A549 (cell line): ENCODE measurements at regions of chrX and their contacts with region 1.

Region 1: DNA sequence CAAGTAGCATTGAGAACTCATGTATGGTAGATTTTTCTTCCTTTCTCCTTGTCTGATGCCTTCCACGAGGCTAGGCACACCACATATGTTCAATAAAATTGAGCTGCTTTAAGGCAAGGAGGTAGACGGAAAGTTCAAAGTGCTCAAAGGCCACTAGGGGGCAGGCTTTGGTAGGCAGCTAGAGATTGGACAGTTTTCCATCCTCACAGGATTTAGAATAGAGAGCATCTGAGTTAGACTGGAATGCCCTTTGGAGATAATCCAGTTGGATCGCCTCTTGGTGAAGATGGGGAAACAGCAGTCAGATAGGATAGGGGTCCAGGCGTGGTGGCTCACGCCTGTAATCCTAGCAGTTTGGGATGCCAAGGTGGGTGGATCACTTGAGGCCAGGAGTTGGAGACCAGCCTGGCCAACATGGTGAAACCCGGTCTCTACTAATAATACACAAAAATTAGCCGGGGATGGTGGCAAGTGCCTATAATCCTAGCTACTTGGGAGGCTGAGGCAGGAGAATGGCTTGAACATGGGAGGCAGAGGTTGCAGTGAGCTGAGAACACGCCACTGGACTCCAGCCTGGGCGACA is 30.4 kb downstream of the ELF4 start:
- DNase-seq: peak; percentile 71 to 72
- ATAC-seq: peak; percentile 75 to 89; a peak in 5 of 6 replicates
- H3K4me3 ChIP-seq: no peak overlapping the region
- H3K27ac ChIP-seq: no peak overlapping the region
- H3K4me1 ChIP-seq: 0 out of 3 replicates have a peak, but pooled peaks cover 3% of the 10 kb centered on the region
- CTCF ChIP-seq: peak; percentile 78
- EP300 ChIP-seq: no peak
- POLR2A ChIP-seq: no peak
- RAD21 ChIP-seq: peak; percentile 79 to 85

Region 2: DNA sequence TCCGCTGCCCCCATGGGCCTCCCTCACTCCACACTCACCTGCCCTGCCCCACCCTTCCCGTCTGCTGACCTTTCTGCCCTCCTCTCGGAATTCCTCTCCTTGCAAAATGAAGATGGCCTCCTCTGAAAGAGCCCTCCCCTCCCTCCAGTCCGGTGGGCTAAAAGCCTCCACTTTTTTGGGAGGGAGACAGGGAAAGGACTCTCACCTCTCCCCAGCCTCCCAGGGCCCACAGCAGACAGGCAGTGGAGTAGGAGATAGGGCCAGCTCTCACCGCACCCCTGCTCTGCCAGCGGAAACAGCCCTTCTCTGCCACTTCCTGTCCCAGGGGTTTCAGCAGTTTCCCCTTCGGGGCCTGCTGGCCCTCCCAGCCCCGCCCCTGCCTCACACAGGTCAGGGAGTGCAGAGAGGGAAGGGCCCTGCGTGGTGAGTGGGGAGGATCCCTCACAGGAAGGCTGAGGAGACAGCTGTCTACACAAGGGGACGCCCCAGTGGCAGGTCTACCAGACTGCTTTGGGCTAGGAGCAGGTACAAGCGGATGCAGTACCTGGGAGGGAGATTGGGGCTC is 12.1 kb after region 1 on chrX:
- CTCF ChIA-PET with region 1: interaction called, 11 read pairs
- POLR2A ChIA-PET with region 1: no interaction called
- DNase-seq: no peak
- ATAC-seq: peak; percentile 50 to 60; a peak in 4 of 6 replicates
- H3K4me3 ChIP-seq: no peak overlapping the region
- H3K27ac ChIP-seq: peak overlapping the region in 1 of 2 experiments; percentile 25; a peak in 1 of 6 replicates
- H3K4me1 ChIP-seq: 0 out of 3 replicates have a peak, but pooled peaks cover 6% of the 10 kb centered on the region
- CTCF ChIP-seq: no peak
- EP300 ChIP-seq: no peak
- POLR2A ChIP-seq: no peak
- RAD21 ChIP-seq: no peak

Region 3: DNA sequence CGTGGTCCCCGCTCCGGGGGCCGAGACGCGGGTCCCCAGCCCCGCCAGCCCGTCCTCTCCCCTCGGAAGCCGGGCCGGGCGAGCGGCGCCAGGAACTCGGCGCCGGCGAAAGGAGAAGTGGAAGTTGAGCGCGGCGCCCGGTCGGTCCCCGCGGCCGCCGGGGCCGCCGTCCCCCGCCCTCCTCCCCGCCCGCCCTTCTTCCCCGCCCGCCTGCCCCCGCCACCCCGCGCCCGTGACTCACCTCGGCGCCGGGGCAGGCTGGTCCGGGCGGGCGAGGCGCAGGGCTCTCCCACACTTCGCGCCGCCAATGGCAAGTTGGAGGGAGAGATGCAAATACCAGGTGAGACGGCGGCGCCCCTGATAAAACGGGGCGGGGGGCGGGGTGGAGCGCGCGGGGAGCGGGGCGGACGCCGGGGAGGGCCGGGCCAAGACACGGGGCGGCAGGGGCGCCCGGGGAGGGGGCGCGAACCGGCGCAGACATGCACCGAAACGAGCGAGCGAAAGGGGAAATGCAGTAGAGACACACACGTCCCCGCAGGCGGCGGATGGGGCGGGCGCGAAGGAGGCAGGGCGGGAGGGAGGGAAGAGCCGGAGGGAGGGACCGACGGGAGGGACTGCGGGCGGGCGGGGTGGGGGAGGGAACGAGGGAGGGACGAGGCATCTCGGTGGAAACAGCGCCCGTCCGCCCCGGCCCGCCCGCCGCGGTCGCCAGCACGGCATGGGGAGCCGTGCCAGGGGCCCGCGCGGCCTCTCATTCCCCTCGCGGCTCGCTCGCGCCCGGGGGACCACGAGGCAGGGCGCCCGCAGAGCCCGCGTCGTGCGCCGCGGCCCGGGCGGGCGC is 30.7 kb after region 1 on chrX and contains the start of gene ELF4:
- CTCF ChIA-PET with region 1: interaction called, 91 read pairs
- POLR2A ChIA-PET with region 1: interaction called, 4 read pairs
- DNase-seq: peak; percentile 65 to 70
- ATAC-seq: peak; percentile 51 to 71
- H3K4me3 ChIP-seq: peak within 1 kb of the TSS; percentile 98
- H3K27ac ChIP-seq: peak within 1 kb of the TSS; percentile 85 to 98
- H3K4me1 ChIP-seq: peaks cover 41% of the 10 kb centered on the region
- CTCF ChIP-seq: 0 out of 3 replicates have a peak, but pooled peaks have one; percentile 16
- EP300 ChIP-seq: no peak
- POLR2A ChIP-seq: peak; percentile 14; the same call in 1 of the 2 replicates
- RAD21 ChIP-seq: no peak
- polyA plus RNA-seq, gene ELF4: 18.0 and 18.4 TPM in 2 replicates

Region 4: DNA sequence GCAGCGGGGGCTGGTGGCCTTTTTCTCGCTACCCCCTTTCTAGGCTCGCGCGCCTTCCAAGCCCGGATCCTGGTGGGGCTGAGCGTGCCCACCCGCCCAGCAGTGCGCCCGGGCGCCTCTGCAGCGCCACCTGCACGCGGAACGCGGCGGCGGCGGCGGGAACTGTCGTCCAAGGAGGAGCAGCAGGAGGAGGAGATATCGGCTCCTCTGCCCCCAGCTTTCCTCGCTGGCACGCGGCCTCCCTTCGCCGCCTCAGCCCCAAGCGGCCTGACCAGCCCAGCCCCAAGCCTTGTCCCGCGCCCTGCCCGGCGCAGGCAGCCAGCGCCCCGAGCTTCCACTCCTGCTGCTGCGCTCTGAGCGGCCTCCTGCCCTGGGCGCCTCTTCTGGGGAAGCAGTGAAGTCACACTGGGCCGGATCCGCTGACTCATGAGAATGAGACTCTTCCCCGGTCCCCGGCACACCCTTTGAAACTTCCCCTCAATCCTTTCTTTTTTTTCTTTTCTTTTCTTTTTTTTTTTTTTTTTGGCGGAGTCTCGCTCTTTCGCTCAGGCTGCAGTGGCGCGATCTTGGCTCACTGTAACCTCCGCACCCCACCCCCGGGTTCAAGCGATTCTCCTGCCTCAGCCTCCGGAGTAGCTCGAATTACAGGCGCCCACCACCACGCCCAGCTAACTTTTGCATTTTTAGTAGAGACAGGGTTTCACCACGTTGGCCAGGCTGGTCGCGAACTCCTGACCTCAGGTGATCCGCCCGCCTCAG is 41.0 kb after region 1 on chrX:
- CTCF ChIA-PET with region 1: interaction called, 91 read pairs
- POLR2A ChIA-PET with region 1: interaction called, 3 read pairs
- DNase-seq: peak; percentile 73 to 84
- ATAC-seq: peak; percentile 91 to 92
- H3K4me3 ChIP-seq: peak overlapping the region; percentile 46
- H3K27ac ChIP-seq: peak overlapping the region; percentile 94 to 100
- H3K4me1 ChIP-seq: peaks cover 30% of the 10 kb centered on the region
- CTCF ChIP-seq: peak; percentile 70
- EP300 ChIP-seq: no peak
- POLR2A ChIP-seq: no peak
- RAD21 ChIP-seq: peak; percentile 38 to 58; a peak in 4 of 5 replicates

Region 5: GRCh38 chrX:130190801-130191200 is 110.9 kb after region 1 on chrX:
- CTCF ChIA-PET with region 1: interaction called, 58 read pairs
- POLR2A ChIA-PET with region 1: no interaction called
- DNase-seq: no peak
- ATAC-seq: no peak
- H3K4me3 ChIP-seq: no peak overlapping the region
- H3K27ac ChIP-seq: no peak overlapping the region
- H3K4me1 ChIP-seq: no peaks in the 10 kb centered on the region
- CTCF ChIP-seq: no peak
- EP300 ChIP-seq: no peak
- POLR2A ChIP-seq: no peak
- RAD21 ChIP-seq: no peak

Region 6: DNA sequence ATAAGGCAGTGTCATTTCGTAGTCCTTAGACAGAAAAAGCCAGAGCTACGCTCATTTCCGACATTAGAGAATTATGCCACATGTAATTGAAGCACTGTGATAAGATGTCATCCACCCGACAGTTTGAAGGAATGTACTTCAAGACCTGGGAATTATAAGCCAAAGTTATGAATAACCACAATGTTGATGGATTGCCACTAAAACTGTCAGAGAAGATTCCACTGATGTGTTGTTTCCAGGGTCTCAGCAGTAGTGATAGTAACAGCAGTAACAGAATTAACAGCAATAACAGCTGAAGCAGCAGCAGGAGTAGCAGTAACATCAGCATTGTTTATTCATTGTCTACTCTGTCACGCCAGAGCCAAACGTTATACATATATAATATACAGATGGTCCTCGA is 116.6 kb after region 1 on chrX:
- CTCF ChIA-PET with region 1: interaction called, 58 read pairs
- POLR2A ChIA-PET with region 1: no interaction called
- DNase-seq: no peak
- ATAC-seq: no peak
- H3K4me3 ChIP-seq: no peak overlapping the region
- H3K27ac ChIP-seq: no peak overlapping the region
- H3K4me1 ChIP-seq: no peaks in the 10 kb centered on the region
- CTCF ChIP-seq: no peak
- EP300 ChIP-seq: no peak
- POLR2A ChIP-seq: no peak
- RAD21 ChIP-seq: no peak